Activated B cell treated with CpG ODN at 0.5 μM for 24 hours (primary cell): ENCODE measurements at regions of chr4 and their contacts with region 1.

Region 1: DNA sequence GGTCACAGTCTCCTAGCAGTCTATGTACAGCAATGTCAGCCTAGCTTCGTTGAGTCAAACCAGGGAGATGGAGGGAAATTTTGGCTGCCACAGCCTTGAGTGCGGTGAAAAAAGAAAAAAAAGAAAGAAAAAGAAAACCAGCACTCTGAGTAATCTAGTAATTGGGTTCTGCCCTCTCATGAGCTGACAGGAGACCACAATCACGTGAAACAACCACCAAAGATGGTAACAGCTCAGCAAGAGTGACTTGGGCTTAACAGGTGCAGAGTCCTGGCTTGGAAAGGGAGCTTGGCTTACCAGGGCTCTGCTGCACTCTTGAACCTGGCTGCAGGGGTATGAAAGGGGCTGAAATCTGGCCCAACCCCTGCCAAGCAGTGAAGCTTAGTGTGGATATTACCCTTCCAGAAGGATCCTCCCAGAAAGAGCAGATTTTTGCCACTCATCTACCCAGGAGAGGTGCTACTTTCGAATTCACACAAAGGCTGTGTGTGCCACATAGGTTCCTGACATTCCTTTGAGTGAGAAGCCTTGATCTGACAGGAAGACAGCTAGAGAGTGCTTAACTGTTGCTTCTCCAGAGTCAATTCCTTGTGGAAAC is 350.3 kb downstream of the PTTG2 start:
- DNase-seq: no peak
- ATAC-seq: peak; percentile 80
- H3K4me3 Mint-ChIP-seq: peak overlapping the region; percentile 62
- H3K27ac Mint-ChIP-seq: peak overlapping the region; percentile 76
- H3K4me1 Mint-ChIP-seq: peaks cover 59% of the 10 kb centered on the region
- H3K27me3 Mint-ChIP-seq: no peaks in the 10 kb centered on the region
- CTCF ChIP-seq: no peak

Region 2: GRCh38 chr4:38523524-38524448 is 213.2 kb after region 1 on chr4:
- CTCF ChIA-PET with region 1: no interaction called
- POLR2A ChIA-PET with region 1: no interaction called
- intact Hi-C with region 1: loop called (anchors 5 kb)
- DNase-seq: no peak
- ATAC-seq: peak; percentile 91
- H3K4me3 Mint-ChIP-seq: peak overlapping the region; percentile 47
- H3K27ac Mint-ChIP-seq: no peak overlapping the region
- H3K4me1 Mint-ChIP-seq: peaks cover 8% of the 10 kb centered on the region
- H3K27me3 Mint-ChIP-seq: peaks cover 2% of the 10 kb centered on the region
- CTCF ChIP-seq: no peak